Activated B cell treated with CpG ODN at 0.5 μM for 24 hours (primary cell): ENCODE measurements at regions of chr11 and their contacts with region 1.

Region 1: DNA sequence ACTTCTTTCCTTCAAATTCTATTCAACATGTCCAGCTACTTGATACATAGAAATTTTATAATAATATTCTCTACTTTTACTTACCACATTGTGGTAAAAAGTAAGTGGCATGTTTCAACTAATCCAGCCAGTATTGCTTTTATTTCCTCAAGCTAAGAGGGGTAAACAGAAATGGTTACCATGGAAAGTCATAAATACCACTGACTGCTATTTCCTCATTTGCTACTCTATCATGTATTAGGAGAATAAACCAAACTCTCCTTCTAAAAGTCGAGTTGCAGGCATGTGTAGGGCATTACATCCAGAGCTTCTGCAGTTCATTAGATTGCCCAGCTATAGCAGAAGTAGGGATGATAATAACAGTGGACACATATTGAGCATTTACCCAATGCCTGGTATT is 208.4 kb downstream of the MAML2 start:
- DNase-seq: no peak
- ATAC-seq: peak; percentile 69
- H3K4me3 Mint-ChIP-seq: no peak overlapping the region
- H3K27ac Mint-ChIP-seq: peak overlapping the region; percentile 73
- H3K4me1 Mint-ChIP-seq: peaks cover 47% of the 10 kb centered on the region
- H3K27me3 Mint-ChIP-seq: no peaks in the 10 kb centered on the region
- CTCF ChIP-seq: no peak

Region 2: GRCh38 chr11:96091476-96091875 is 43.1 kb before region 1 on chr11:
- CTCF ChIA-PET with region 1: no interaction called
- POLR2A ChIA-PET with region 1: no interaction called
- intact Hi-C with region 1: loop called (anchors 5 kb)
- DNase-seq: no peak
- ATAC-seq: peak; percentile 77
- H3K4me3 Mint-ChIP-seq: no peak overlapping the region
- H3K27ac Mint-ChIP-seq: no peak overlapping the region
- H3K4me1 Mint-ChIP-seq: peaks cover 3% of the 10 kb centered on the region
- H3K27me3 Mint-ChIP-seq: no peaks in the 10 kb centered on the region
- CTCF ChIP-seq: no peak

Region 3: DNA sequence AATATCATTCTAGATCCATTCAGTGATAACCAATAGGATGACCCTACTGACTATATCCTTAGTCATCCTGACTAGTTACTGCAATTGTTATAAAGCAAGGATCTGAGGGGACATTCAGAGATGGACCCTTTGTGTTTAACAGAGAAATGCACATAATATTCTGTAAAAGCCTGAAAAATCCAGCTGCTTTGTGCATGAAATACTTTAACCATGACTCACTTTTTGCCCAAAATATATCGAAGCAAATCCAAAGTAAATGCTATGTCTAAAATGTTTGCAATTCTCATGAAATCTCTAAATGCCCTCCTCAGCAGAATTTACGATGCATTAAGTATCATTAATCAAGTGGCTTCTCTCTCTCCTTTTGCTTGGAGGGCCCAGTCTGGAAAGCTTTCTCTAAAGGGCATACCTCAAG is 31.9 kb before region 1 on chr11:
- CTCF ChIA-PET with region 1: no interaction called
- POLR2A ChIA-PET with region 1: no interaction called
- intact Hi-C with region 1: no loop called
- DNase-seq: no peak
- ATAC-seq: no peak
- H3K4me3 Mint-ChIP-seq: no peak overlapping the region
- H3K27ac Mint-ChIP-seq: no peak overlapping the region
- H3K4me1 Mint-ChIP-seq: peaks cover 2% of the 10 kb centered on the region
- H3K27me3 Mint-ChIP-seq: no peaks in the 10 kb centered on the region
- CTCF ChIP-seq: no peak

Region 4: DNA sequence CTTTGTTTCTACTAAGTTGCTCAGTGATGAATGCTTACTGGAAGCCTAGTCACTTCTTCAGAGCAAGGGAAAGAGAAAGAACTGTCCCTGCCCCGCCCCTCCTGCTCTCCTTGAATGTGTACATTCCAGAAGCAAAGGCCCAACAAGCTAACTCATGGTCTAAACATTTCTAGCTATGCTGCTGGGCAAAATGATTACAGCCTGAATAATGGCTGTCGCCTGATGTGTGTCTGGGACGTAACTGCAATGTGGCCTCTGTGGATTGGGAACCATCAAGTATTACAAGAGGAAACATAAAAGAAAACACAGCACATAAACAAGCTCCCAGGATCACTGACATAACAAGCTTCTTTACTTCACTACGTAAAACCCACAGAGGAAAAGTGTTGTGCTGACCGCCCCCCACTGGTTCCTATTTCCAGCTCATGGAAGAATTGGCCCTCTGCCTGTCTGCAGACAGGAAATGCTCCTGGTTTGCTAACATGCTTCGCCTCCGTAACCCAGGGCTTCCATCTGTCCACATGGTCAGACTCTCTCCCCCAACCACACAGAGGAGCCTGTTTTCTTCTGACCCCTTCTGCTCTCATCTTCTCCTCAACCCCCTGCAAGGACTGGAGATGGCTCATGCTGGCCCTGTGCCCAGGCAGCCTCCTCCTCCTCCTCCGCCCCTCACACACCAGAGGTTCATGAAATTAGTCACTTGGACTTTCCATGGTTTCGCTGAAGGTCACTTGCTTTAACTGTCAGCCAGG is 21.2 kb after region 1 on chr11:
- CTCF ChIA-PET with region 1: no interaction called
- POLR2A ChIA-PET with region 1: no interaction called
- intact Hi-C with region 1: no loop called
- DNase-seq: peak; percentile 22
- ATAC-seq: peak; percentile 72
- H3K4me3 Mint-ChIP-seq: peak overlapping the region; percentile 64
- H3K27ac Mint-ChIP-seq: peak overlapping the region; percentile 79
- H3K4me1 Mint-ChIP-seq: peaks cover 36% of the 10 kb centered on the region
- H3K27me3 Mint-ChIP-seq: no peaks in the 10 kb centered on the region
- CTCF ChIP-seq: no peak